ENCODE measurements at regions of chr4 and their contacts with region 1.

Region 1: GRCh38 chr4:8917868-8918783 is 46.5 kb upstream of the HMX1 start:
- DNase-seq: peak; percentile 72
- ATAC-seq: peak; percentile 58

Region 2: DNA sequence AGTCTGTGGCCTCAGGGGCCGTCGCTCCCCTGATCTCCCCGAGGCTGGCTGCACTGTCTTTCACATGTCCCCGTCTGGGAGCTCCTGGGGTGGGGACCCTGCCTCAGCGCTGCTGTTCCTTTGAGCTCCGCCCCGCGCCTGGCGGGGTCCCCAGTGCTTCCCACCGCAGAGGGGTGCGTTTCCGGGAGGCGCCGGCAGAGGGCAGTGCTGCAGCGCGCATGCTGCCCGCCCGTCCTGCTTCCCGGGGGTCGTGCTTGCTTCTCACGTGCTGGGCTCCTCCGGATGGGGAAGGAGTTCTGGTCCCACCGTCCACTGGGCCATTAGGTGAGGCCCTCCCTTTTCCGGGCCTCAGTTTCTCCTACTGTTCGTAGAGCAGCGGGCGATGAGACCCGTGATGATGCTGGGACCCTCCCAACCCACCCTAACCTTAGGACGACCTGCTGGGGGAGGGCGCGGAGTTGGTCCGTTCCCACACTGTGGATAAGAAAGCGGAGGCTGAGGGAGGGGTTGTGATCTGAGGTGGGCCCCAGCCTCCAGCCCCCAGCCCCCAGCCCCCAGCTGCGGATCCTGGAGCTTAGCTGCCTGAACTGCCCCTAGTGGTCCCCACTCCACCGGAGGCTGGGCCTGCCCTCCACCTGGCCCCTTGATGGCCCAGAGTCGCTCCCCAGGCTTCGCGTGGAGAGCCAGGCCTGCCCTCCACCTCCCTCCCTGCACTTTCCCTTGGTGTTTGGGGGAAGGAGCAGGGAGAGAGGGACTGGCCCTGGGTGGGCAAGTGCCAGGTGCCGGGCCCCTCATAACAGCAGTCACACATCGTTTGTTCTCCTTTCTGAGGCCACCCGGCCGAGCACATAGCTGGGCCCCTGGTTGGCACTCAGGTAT is 310.3 kb before region 1 on chr4:
- intact Hi-C with region 1: loop called (anchors 10 kb)
- DNase-seq: no peak
- ATAC-seq: no peak

Region 3: GRCh38 chr4:8932884-8933283 is 14.8 kb after region 1 on chr4:
- intact Hi-C with region 1: no loop called
- DNase-seq: no peak
- ATAC-seq: no peak

Measured in sciatic nerve (tissue), 2 donors.